Head of caudate nucleus (tissue), 42 donors: ENCODE measurements at regions of chr14 and their contacts with region 1.

Region 1: DNA sequence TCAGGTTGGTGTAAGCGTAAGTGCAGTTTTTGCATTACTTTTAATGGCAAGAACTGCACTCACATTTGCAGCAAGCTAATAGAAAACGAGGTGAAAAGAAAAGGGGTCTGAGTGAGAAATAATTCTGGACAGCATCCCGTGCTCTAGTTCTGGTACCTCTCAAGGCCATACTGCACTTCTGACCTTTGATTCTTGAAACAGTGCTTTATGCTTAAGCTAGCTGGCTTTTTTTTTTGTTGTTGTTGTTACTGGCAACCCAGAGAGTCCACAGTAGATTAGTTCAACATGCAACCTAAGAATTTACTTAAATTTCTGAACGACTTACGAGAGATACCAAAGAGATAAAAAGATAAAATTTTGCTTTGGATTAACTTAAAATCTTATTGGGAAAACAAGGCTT is 75.2 kb upstream of the PRKD1 start:
- DNase-seq: no peak

Region 2: GRCh38 chr14:29548948-29549370 is 453.9 kb before region 1 on chr14:
- intact Hi-C with region 1: loop called (anchors 5 kb)
- DNase-seq: peak in 10 of 42 donors; percentile 10 to 60 (median 26)

Region 3: DNA sequence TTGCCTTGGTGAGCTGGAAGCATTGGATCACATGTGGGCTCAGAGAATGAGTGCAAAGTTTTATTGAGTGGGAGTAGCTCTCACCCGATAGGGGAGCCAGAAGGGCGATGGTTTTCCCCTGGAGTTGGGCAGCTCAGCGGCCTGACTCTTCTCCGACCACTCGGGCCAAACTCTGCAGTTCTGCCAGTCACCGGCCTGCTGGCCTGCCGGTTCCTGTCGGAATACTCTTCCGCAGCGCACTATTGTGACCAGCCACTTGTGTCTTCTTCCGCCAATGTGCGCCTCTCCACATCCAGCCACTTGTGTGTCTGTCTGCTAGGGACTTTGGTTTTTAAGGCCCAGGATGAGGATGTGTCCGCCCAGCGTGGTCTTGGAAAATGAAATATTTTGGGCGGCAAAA is 31.8 kb before region 1 on chr14:
- intact Hi-C with region 1: no loop called
- DNase-seq: no peak

Region 4: DNA sequence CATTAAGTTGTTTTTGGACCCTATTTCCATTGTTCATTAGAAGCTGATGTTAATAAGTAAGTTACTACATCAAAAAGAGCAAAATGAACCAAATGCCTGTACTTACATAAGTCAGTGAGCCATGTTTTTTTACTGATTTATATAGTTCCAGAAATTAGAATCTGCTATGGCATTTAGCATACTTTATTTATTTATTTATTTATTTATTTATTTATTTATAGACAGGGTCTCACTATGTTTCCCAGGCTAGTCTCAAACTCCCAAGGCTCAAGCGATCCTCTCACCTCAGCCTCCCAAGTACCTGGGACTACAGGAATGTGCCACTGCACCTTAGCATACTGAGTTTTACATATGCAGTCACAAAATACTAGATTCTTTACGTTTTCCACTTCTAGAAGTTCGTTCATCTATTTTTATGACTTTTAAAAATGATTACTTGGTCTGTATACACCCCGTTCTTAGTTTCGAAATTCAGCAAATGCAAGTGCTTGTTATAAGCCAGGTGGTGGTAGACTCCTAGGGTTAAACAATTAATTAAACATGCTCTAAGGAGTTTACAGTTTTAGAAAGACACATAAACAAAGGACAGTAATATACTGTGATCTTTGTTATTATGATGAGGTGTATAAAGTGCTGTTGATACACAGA is 689.0 kb after region 1 on chr14:
- intact Hi-C with region 1: no loop called
- DNase-seq: no peak